Ascending aorta (tissue), 2 donors: ENCODE measurements at regions of chr15 and their contacts with region 1.

Region 1: GRCh38 chr15:65730549-65731172 is 61.4 kb downstream of the DENND4A start:
- DNase-seq: no peak
- H3K4me3 ChIP-seq: no peak overlapping the region
- H3K27ac ChIP-seq: no peak overlapping the region
- H3K4me1 ChIP-seq: no peaks in the 10 kb centered on the region
- H3K27me3 ChIP-seq: no peaks in the 10 kb centered on the region
- CTCF ChIP-seq: no peak

Region 2: DNA sequence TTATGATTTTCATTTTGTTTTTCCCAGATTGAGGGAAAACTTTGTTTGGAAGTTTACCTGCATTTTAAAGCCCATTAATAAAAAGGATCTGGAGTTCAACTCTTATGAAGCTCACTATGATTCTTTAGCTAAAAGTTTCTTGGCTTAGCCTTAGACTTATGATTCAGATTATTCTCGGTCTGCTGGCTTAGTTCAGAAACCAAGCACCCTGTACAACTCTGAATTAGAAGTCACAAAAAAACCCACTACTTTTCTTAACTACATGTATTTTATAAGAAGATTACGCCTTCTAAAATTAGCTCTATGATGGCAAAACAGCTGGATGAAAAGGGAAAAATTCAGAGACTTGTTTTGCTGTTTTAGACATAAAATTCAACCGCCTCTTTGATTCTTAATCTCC is 75.7 kb after region 1 on chr15:
- intact Hi-C with region 1: loop called (anchors 2 kb)
- DNase-seq: no peak
- H3K4me3 ChIP-seq: no peak overlapping the region
- H3K27ac ChIP-seq: no peak overlapping the region
- H3K4me1 ChIP-seq: peaks cover 0 to 10% of the 10 kb centered on the region in 2 donors
- H3K27me3 ChIP-seq: no peaks in the 10 kb centered on the region
- CTCF ChIP-seq: no peak

Region 3: GRCh38 chr15:66237513-66238235 is 507.0 kb after region 1 on chr15:
- intact Hi-C with region 1: loop called (anchors 5 kb)
- DNase-seq: no peak
- H3K4me3 ChIP-seq: no peak overlapping the region
- H3K27ac ChIP-seq: no peak overlapping the region
- H3K4me1 ChIP-seq: no peaks in the 10 kb centered on the region
- H3K27me3 ChIP-seq: no peaks in the 10 kb centered on the region
- CTCF ChIP-seq: no peak